Heart left ventricle (tissue), 16 donors: ENCODE measurements at regions of chr3 and their contacts with region 1.

Region 1: DNA sequence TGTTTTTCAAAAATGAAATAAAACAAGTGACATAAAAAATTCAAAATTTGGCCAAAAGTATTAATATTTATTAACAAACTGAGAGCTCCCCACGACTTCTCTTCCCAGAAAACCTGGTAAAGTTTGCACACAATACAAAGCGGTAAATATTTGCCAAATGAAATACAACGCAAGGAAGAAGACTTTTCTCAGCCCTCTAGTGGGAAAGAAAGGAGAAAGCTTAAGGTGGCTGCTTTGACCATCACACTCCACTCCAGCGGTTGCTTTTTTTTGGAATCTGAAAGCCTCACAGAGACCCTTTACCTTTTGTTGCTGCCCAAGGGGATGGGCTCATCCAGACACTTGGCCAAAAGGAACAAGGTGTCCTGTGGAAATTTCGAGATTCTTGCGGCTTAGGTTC is 1.1 kb upstream of the GK5 start:
- DNase-seq: no peak
- ATAC-seq: no peak
- H3K4me3 ChIP-seq: no peak overlapping the region
- H3K27ac ChIP-seq: no peak overlapping the region
- H3K4me1 ChIP-seq: peaks cover 0 to 25% (median 8%) of the 10 kb centered on the region in 12 donors
- H3K27me3 ChIP-seq: no peaks in the 10 kb centered on the region
- CTCF ChIP-seq: no peak
- POLR2A ChIP-seq: no peak

Region 2: DNA sequence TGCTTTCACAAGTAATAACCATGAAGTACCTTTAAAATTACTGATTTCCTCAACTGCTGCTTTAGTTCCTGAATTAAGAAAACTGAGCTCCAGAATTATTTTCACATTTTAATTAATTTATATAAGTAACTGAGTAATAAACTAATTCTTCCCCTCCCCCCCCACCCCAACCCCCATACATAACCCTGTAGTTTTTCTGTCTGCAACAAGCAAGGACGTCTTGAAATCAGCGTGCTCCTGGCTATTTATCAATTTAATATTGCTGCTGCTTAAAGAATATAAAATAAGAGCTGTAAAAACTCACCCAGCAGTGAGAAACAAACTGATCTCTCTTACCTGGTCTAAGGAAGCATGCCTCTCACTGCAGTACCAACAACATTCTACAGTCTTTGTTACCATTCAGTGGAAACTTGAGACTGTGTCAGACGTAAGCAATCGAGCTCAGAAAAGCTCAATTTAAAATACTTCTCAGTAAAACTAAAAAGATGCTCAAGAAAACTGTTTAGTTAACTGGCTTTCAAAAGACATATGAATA is 198.2 kb before region 1 on chr3:
- intact Hi-C with region 1: loop called in 1 of 10 experiments (anchors 10 kb)
- DNase-seq: peak in 1 of 5 donors; percentile 38
- ATAC-seq: peak; percentile 84 to 90 (median 84)
- H3K4me3 ChIP-seq: peak overlapping the region; percentile 20 to 64 (median 49)
- H3K27ac ChIP-seq: peak overlapping the region in 10 of 12 donors; percentile 1 to 69 (median 48)
- H3K4me1 ChIP-seq: peaks cover 0 to 40% (median 7%) of the 10 kb centered on the region in 12 donors
- H3K27me3 ChIP-seq: no peaks in the 10 kb centered on the region
- CTCF ChIP-seq: peak in 1 of 12 donors; percentile 25
- POLR2A ChIP-seq: no peak

Region 3: DNA sequence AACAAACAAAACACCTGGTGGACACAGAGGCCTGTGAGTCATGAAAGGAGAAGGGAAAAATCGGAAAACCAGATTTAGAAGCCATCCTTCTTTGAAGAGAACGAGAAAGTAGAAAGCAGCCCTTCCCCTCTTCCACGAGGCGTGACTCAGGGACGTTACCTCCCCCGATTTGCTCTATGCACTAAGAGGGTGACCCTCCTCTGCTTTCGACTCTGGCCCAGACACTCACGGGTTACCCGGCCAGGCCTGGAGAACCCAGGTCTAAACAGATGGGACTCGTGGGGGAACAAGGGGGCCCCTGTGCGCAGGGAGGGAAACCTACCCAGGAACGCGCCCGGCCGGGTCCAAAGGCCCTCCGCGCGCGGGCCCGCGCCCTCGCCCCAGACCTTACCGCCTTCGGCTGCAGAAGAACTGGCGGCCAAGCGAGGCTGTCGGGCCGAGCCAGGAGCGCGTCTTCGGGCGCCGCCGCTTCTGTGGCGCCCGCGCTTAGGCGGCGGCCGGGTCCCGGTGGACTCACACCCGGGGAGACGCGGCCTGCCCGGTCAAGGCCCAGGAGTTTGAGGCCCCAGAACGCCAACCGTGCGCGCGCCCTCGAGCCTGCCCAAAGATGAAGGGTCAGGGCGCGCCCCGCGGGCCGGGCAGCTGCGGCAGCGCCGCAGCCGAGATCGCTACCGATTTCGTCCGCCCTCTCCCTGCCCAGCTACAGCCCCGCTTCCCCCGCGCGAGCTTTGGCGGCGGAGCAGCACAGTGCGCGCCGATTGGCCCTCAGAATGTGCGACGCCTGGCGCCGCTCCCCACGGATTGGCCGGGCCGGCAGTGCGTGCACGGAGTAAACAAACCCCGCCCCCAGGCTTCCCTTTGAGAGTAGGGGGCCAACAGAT is 77.5 kb before region 1 on chr3 and contains the start of gene TFDP2:
- intact Hi-C with region 1: loop called in 1 of 10 experiments (anchors 5 kb)
- DNase-seq: peak; percentile 90 to 96 (median 91)
- ATAC-seq: peak; percentile 98 to 100 (median 100)
- H3K4me3 ChIP-seq: peak within 1 kb of the TSS; percentile 69 to 92 (median 84)
- H3K27ac ChIP-seq: peak within 1 kb of the TSS in 11 of 12 donors; percentile 43 to 90 (median 83)
- H3K4me1 ChIP-seq: peaks cover 4 to 20% (median 12%) of the 10 kb centered on the region in 12 donors
- H3K27me3 ChIP-seq: no peaks in the 10 kb centered on the region
- CTCF ChIP-seq: peak in 2 of 12 donors; percentile 10 to 22
- POLR2A ChIP-seq: peak; percentile 59 to 72
- total RNA-seq, gene TFDP2: 43.9 to 80.9 (median 52.5) TPM